Dendritic cell treated with granulocyte-macrophage colony-stimulating factor and Interleukin-4, amounts not matched to agents 40 ng/mL and 50 ng/mL, for 4 days (primary cell): ENCODE measurements at regions of chr1 and their contacts with region 1.

Region 1: DNA sequence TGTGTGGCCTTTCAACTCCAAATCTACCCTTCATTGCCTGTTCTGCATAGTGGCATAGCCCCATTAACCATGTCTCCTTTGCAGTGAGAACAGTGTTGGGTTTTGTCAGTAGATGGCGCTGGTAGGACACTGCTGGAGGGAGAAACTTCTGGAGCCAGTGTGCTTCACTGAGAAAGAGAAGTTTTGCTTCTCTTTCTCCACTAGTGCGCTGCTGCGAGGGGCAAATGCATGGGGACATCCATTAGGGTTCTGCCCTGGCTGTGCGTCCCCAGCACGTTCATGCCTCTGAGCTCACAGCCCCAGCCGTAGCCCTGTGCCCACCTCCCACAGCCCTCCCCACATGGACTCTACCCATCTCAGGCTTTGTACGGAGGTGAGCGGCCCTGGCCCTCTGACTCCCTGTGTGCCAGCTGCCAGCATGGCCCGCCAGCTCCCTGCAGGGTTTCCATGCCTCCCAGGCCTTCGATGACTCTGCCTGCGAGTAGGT is 53.1 kb downstream of the RIMS3 start:
- H3K4me3 Mint-ChIP-seq: no peak overlapping the region
- H3K27ac Mint-ChIP-seq: no peak overlapping the region
- H3K4me1 Mint-ChIP-seq: peaks cover 18% of the 10 kb centered on the region
- H3K27me3 Mint-ChIP-seq: peaks cover 3% of the 10 kb centered on the region

Region 2: GRCh38 chr1:40531381-40532061 is 80.9 kb before region 1 on chr1 and contains the start of gene ZNF684:
- intact Hi-C with region 1: no loop called
- H3K4me3 Mint-ChIP-seq: peak within 1 kb of the TSS; percentile 96
- H3K27ac Mint-ChIP-seq: peak within 1 kb of the TSS; percentile 92
- H3K4me1 Mint-ChIP-seq: peaks cover 19% of the 10 kb centered on the region
- H3K27me3 Mint-ChIP-seq: no peaks in the 10 kb centered on the region

Region 3: DNA sequence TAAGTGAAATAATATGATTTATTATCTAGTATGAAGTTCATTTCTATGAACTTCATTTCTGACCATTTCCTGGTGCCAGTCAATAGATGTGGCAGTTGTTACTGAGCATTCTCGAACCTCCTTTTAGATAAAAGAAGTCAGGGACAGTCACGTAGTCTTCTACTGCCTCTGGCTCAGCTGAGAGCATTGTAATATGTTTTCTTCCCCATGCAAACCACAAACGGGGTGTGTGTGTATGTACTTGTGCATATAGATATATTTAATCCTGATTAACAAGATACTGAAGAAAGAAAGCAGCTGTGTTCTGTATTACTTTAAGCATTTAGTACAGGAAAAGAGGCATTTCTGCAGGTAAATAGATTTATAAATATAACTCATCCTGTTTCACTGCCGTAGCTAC is 59.4 kb before region 1 on chr1:
- intact Hi-C with region 1: no loop called
- H3K4me3 Mint-ChIP-seq: no peak overlapping the region
- H3K27ac Mint-ChIP-seq: no peak overlapping the region
- H3K4me1 Mint-ChIP-seq: no peaks in the 10 kb centered on the region
- H3K27me3 Mint-ChIP-seq: no peaks in the 10 kb centered on the region

Region 4: GRCh38 chr1:40668769-40669525 is 56.6 kb after region 1 on chr1:
- intact Hi-C with region 1: loop called (anchors 1 kb)
- H3K4me3 Mint-ChIP-seq: peak overlapping the region; percentile 41
- H3K27ac Mint-ChIP-seq: peak overlapping the region; percentile 26
- H3K4me1 Mint-ChIP-seq: peaks cover 19% of the 10 kb centered on the region
- H3K27me3 Mint-ChIP-seq: peaks cover 15% of the 10 kb centered on the region

Region 5: GRCh38 chr1:40774266-40774998 is 162.0 kb after region 1 on chr1:
- intact Hi-C with region 1: loop called (anchors 10 kb)
- H3K4me3 Mint-ChIP-seq: no peak overlapping the region
- H3K27ac Mint-ChIP-seq: no peak overlapping the region
- H3K4me1 Mint-ChIP-seq: peaks cover 15% of the 10 kb centered on the region
- H3K27me3 Mint-ChIP-seq: no peaks in the 10 kb centered on the region

Region 6: DNA sequence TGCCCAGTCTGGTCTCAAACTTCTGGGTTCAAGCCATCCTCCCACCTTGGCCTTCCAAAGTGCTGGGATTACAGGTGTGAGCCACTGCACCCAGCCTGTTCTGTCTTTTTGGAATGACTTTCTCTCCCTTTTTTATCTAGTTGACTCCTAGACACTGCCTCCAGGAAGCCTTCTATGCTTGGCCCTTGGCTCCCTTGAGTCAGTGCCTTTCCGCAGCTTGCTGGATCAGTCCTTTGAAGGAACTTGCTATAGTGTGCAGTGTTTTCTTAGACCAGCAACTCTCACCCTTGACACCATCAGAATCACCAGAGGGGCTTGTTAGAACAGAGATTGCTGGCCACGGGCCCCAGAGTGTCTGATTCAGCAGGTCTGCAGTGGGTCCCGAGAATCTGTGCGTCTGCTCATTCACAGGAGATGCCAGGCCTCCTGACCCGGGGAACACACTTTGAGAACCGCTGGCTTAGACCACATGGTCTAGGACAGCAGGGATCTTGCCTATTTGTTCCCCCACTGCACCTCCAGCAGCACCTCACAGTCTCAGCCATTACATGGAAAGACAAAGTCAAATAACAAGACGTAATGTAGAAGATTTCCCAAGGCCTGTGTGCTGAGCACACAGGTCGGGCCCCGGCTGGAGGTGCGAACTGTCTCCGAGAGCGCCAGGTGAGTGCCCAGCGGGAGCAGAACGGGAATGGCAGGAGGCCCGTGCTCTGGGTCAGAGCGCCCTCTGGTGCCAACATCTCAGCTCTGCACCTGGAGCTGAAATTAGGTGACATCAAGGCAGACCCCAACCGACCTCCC is 339.8 kb after region 1 on chr1:
- intact Hi-C with region 1: loop called (anchors 5 kb)
- H3K4me3 Mint-ChIP-seq: peak overlapping the region; percentile 7
- H3K27ac Mint-ChIP-seq: no peak overlapping the region
- H3K4me1 Mint-ChIP-seq: peaks cover 30% of the 10 kb centered on the region
- H3K27me3 Mint-ChIP-seq: peaks cover 50% of the 10 kb centered on the region